ENCODE measurements at regions of chr2 and their contacts with region 1.

Region 1: GRCh38 chr2:233449081-233449901 is 95.0 kb downstream of the DGKD start:
- DNase-seq: peak; percentile 38 to 85
- H3K4me3 ChIP-seq: no peak overlapping the region
- H3K27ac ChIP-seq: no peak overlapping the region
- H3K4me1 ChIP-seq: no peaks in the 10 kb centered on the region; a peak in 1 of 7 replicates
- H3K27me3 ChIP-seq: no peaks in the 10 kb centered on the region
- CTCF ChIP-seq: peak; percentile 79 to 89 (median 83)
- EP300 ChIP-seq: no peak
- POLR2A ChIP-seq: no peak
- RAD21 ChIP-seq: peak; percentile 60 to 78

Region 2: GRCh38 chr2:233354971-233355574 is 94.2 kb before region 1 on chr2:
- CTCF ChIA-PET with region 1: interaction called, 11 read pairs
- POLR2A ChIA-PET with region 1: no interaction called
- DNase-seq: peak in 1 of 2 experiments; percentile 64
- H3K4me3 ChIP-seq: peak overlapping the region; percentile 53 to 90 (median 72)
- H3K27ac ChIP-seq: no peak overlapping the region
- H3K4me1 ChIP-seq: peaks cover 0 to 5% (median 4%) of the 10 kb centered on the region in 4 experiments; a peak in 4 of 7 replicates
- H3K27me3 ChIP-seq: peaks cover 0 to 28% (median 15%) of the 10 kb centered on the region in 4 experiments; a peak in 5 of 7 replicates
- CTCF ChIP-seq: no peak
- EP300 ChIP-seq: no peak
- POLR2A ChIP-seq: no peak
- RAD21 ChIP-seq: no peak

Region 3: DNA sequence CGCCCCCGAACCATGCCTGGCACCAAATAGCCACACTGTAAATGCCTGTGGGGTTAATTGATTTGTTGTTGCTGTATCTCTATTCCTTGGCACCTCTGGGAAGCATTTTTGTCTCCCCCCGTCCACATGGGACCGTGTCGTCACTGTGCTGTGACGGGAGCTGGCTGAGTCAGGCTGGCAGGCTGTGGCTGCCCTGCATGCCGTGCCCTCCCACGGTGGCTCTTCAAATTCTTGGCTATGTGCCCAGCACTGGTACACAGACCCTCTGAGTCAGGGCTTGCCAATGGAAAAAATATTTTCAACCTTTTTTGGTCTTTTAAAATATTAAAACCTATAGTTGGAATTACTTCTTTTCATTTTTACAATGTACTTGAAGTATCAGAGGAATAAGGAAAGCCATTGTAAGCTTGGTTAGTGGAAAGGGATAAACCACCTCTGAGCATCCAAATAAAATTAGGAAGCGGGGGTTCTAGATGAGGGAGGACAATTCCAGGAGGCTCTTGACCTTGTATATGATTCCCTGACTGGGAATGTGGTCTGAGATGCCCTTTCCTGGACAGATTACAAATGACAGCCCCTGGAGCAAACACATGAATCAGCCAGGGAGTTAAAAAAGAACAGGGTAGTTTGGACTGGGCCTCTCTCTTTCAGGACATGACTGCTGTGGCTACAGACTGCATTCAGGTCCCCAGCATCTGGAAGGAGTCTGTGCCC is 35.6 kb before region 1 on chr2:
- CTCF ChIA-PET with region 1: interaction called, 26 read pairs
- POLR2A ChIA-PET with region 1: no interaction called
- DNase-seq: peak in 1 of 2 experiments; percentile 22
- H3K4me3 ChIP-seq: no peak overlapping the region
- H3K27ac ChIP-seq: no peak overlapping the region
- H3K4me1 ChIP-seq: no peaks in the 10 kb centered on the region; a peak in 1 of 7 replicates
- H3K27me3 ChIP-seq: no peaks in the 10 kb centered on the region
- CTCF ChIP-seq: no peak
- EP300 ChIP-seq: no peak
- POLR2A ChIP-seq: no peak
- RAD21 ChIP-seq: no peak

Region 4: DNA sequence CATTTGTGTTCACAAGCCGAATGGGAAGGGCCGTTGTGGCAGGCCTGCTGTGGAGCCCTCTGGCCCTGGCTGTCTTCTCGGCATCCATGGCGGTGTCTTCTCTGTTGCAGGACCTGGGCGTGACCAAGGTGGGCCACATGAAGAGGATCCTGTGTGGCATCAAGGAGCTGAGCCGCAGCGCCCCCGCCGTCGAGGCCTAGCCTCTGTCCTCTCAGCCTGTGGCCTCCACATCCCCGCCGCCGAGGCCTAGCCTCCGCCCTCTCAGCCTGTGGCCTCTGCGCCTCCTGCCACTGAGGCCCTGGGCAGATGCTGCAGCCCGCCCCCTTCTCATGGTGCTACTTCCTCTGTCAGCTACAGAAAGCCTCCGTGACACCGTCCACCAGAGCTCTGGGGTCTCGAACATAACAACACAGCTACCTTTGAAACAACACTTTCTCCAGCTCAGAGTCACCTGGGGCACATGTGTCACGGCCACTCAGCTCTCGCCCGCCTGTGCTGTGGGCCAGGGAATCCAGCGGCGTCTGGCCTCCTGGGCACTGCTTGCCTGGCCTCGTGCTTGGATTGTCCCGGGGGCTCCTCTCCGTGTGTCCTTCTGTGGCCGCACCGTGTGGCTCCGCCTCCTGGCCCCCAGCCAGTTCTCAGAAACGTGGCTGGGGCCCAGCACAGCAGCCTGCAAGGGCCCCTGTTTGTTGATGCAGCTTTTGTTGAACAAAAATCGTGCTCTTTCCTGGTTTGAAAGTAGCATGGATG is 20.1 kb after region 1 on chr2:
- CTCF ChIA-PET with region 1: interaction called, 12 read pairs
- POLR2A ChIA-PET with region 1: no interaction called
- DNase-seq: no peak
- H3K4me3 ChIP-seq: no peak overlapping the region
- H3K27ac ChIP-seq: no peak overlapping the region
- H3K4me1 ChIP-seq: peaks cover 0 to 4% (median 0%) of the 10 kb centered on the region in 4 experiments; a peak in 2 of 7 replicates
- H3K27me3 ChIP-seq: no peaks in the 10 kb centered on the region
- CTCF ChIP-seq: no peak
- EP300 ChIP-seq: no peak
- POLR2A ChIP-seq: no peak
- RAD21 ChIP-seq: no peak

Region 5: DNA sequence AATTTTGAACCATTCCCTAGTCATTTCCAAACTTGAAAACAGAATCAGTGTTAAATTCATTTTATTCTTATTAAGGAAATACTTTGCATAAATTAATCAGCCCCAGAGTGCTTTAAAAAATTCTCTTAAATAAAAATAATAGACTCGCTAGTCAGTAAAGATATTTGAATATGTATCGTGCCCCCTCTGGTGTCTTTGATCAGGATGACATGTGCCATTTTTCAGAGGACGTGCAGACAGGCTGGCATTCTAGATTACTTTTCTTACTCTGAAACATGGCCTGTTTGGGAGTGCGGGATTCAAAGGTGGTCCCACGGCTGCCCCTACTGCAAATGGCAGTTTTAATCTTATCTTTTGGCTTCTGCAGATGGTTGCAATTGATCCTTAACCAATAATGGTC is 323.3 kb after region 1 on chr2:
- CTCF ChIA-PET with region 1: no interaction called
- POLR2A ChIA-PET with region 1: no interaction called
- DNase-seq: no peak
- H3K4me3 ChIP-seq: no peak overlapping the region
- H3K27ac ChIP-seq: no peak overlapping the region
- H3K4me1 ChIP-seq: no peaks in the 10 kb centered on the region; a peak in 1 of 7 replicates
- H3K27me3 ChIP-seq: no peaks in the 10 kb centered on the region
- CTCF ChIP-seq: no peak
- EP300 ChIP-seq: no peak
- POLR2A ChIP-seq: no peak
- RAD21 ChIP-seq: no peak

Region 6: DNA sequence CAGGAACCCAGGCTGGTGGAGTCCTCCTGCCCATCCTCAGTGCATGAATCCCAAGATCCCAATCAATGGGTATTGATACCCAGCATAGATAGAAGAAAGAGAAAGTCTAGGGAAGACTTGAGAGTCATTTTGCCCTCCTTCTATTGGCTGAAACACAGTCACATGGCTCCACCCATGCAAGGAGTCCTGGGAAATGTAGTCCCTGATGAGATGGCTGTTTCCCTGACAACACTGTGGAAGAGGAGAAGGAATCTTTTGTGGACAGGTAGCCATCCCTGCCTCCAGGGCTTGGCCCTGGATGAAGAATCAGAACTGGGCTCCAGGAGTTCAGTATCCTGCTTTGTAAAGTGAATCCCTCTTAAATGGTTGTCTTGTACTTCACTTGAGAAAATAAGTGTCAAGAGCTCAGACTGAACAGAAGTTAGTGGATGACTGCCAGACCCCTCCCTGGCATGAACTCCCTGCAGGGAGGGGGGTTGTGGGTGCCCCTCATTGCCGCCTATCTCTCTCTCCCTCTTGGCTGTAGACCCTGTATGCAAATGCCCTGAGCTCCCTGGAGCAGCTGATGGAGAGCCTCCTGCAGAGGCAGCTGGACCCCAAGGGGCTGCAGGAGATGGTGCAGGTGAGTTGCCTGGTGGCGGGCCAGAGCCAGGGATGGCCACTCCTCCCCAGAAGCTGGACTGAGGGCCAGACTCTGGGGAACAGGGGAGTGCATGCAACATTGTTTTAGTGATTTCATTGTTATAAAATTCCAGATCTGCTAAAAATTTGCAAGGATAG is 365.0 kb after region 1 on chr2:
- CTCF ChIA-PET with region 1: no interaction called
- POLR2A ChIA-PET with region 1: no interaction called
- DNase-seq: no peak
- H3K4me3 ChIP-seq: no peak overlapping the region
- H3K27ac ChIP-seq: no peak overlapping the region
- H3K4me1 ChIP-seq: no peaks in the 10 kb centered on the region
- H3K27me3 ChIP-seq: no peaks in the 10 kb centered on the region
- CTCF ChIP-seq: no peak
- EP300 ChIP-seq: no peak
- POLR2A ChIP-seq: no peak
- RAD21 ChIP-seq: no peak

Region 7: GRCh38 chr2:233832869-233833311 is 383.6 kb after region 1 on chr2:
- CTCF ChIA-PET with region 1: interaction called, 35 read pairs
- POLR2A ChIA-PET with region 1: interaction called, 3 read pairs
- DNase-seq: peak; percentile 38 to 84
- H3K4me3 ChIP-seq: no peak overlapping the region
- H3K27ac ChIP-seq: no peak overlapping the region
- H3K4me1 ChIP-seq: no peaks in the 10 kb centered on the region
- H3K27me3 ChIP-seq: no peaks in the 10 kb centered on the region
- CTCF ChIP-seq: peak; percentile 70 to 89 (median 79)
- EP300 ChIP-seq: no peak
- POLR2A ChIP-seq: no peak
- RAD21 ChIP-seq: peak; percentile 87 to 88